Motor neuron (in vitro differentiated cells): ENCODE measurements at regions of chr3 and their contacts with region 1.

Region 1: GRCh38 chr3:155870133-155870944 is at the start of gene GMPS:
- ATAC-seq: peak; percentile 76 to 93 (median 91)
- H3K4me3 ChIP-seq: peak within 1 kb of the TSS; percentile 78 to 91 (median 81)
- H3K27ac ChIP-seq: peak within 1 kb of the TSS; percentile 84 to 89
- H3K4me1 ChIP-seq: peaks cover 7 to 8% of the 10 kb centered on the region in 2 donors
- total RNA-seq, gene GMPS: 33.4 to 105 (median 48.1) TPM

Region 2: GRCh38 chr3:155352900-155353490 is 517.3 kb before region 1 on chr3:
- in situ Hi-C with region 1: loop called in 1 of 9 experiments (anchors 25 kb)
- ATAC-seq: peak in 4 of 8 experiments; percentile 36 to 53 (median 48)
- H3K4me3 ChIP-seq: no peak overlapping the region
- H3K27ac ChIP-seq: no peak overlapping the region
- H3K4me1 ChIP-seq: no peaks in the 10 kb centered on the region

Region 3: DNA sequence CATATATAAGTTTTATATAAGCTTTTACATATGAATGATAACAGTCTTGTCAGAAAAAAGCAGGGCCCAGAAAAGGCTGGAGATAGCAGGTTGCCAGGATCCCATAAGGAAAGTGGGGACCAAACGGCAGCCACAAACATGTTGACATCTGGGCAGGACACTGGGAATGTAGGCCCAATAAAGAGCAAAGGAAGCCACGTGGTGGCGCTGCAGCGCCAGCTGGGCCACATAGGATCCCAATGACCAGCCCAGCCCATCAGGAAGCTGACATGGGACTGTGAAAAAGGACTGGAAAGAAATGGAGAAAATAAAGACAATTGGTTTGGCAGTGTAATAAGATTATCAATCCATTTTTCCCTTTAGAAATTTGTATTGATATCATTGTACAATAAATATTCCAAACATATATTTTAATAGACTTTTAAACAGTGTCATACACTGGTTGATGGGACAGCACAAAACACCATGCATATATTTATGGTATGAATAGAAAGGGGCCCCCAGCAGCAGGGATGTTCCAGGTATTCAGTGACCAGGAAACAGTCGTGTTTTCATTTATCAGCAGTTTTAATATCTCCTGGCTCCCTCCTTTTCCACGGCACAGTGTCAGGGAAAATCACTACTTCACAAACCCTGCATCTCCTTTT is 487.8 kb before region 1 on chr3:
- in situ Hi-C with region 1: loop called in 1 of 9 experiments (anchors 25 kb)
- ATAC-seq: peak; percentile 90 to 100 (median 100)
- H3K4me3 ChIP-seq: no peak overlapping the region
- H3K27ac ChIP-seq: no peak overlapping the region
- H3K4me1 ChIP-seq: peaks cover 11% of the 10 kb centered on the region in 2 donors

Region 4: DNA sequence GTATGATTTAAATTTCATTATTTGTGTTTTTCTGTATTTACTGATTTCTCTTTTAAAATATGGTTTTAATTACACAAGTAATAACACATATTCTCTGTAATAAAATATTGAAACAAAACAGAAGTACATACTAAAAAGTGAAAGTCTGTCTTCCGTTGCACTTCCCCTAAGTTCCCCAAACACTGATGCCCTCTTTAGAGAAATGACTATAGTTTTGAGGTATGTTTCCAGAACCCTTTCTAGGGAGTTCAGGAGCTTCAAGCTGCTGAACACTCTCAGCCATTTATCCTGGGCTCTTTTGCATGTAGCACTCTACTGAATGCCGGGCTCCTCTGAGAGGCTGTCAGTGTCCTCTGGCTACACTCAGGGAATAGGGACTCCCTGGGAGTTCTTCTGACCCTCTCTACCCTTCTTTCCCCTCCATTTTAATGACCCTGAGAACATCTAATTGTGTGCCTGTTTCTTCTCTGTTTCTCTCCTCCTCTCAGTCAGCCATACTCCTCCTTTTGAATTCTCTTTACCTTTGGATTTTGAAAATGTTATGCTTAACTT is 189.7 kb after region 1 on chr3:
- in situ Hi-C with region 1: no loop called
- ATAC-seq: peak in 1 of 8 experiments; percentile 27
- H3K4me3 ChIP-seq: no peak overlapping the region
- H3K27ac ChIP-seq: no peak overlapping the region
- H3K4me1 ChIP-seq: no peaks in the 10 kb centered on the region